Body of pancreas (tissue), 4 donors: ENCODE measurements at regions of chr7 and their contacts with region 1.

Region 1: GRCh38 chr7:794671-795329 is 37.5 kb upstream of the SUN1 start:
- DNase-seq: no peak
- ATAC-seq: no peak
- H3K4me3 ChIP-seq: no peak overlapping the region
- H3K27ac ChIP-seq: no peak overlapping the region
- H3K4me1 ChIP-seq: no peaks in the 10 kb centered on the region
- H3K27me3 ChIP-seq: no peaks in the 10 kb centered on the region
- CTCF ChIP-seq: no peak
- POLR2A ChIP-seq: no peak

Region 2: DNA sequence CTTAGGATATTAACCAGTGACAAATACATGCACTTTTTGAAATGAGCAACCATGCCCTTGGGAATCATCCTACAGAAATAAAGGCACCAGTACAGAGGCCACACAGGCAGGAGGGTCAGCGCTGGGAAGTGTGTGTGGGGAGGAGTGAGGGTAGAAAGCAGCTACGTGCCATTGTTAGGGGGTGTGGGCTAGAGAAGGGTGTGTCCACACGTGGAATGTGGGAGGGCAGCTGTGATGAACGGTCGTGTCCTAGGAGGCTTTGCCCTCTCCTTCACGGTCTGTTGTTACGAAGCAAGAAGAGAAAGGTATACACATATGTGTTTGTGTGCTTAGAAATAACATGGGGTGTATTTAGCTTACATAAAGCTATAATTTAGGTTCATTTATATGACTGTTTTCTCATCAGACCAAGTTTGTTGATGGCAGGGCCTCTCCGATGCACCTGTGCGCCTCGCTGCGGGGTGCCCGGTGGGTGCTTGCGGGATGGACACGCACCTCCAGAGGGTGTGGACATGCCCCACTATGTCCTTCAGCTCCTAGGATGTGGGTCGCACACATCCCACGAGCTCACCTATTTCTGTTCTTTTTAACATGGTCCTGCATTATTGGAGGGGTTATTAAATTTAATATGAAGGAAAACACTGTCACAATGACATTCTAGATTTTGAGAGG is 64.7 kb after region 1 on chr7:
- intact Hi-C with region 1: loop called (anchors 5 kb)
- DNase-seq: no peak
- ATAC-seq: no peak
- H3K4me3 ChIP-seq: no peak overlapping the region
- H3K27ac ChIP-seq: no peak overlapping the region
- H3K4me1 ChIP-seq: peaks cover 6% of the 10 kb centered on the region
- H3K27me3 ChIP-seq: no peaks in the 10 kb centered on the region
- CTCF ChIP-seq: no peak
- POLR2A ChIP-seq: no peak

Region 3: GRCh38 chr7:1076181-1077072 is 281.6 kb after region 1 on chr7:
- intact Hi-C with region 1: no loop called
- DNase-seq: peak; percentile 78 to 88 (median 86)
- ATAC-seq: peak; percentile 83
- H3K4me3 ChIP-seq: no peak overlapping the region
- H3K27ac ChIP-seq: peak overlapping the region; percentile 65 to 84 (median 76)
- H3K4me1 ChIP-seq: peaks cover 32% of the 10 kb centered on the region
- H3K27me3 ChIP-seq: no peaks in the 10 kb centered on the region
- CTCF ChIP-seq: peak in 2 of 7 experiments; percentile 15 to 16
- POLR2A ChIP-seq: peak in 1 of 3 donors; percentile 7